Activated T-helper 2 cell treated with anti-CD3 and anti-CD28 coated beads, Interferon-gamma antibody, Interleukin-2, Interleukin-4, amounts not matched to agents 10 μg/mL and 5 μg/mL and 100 μg/mL, durations not matched to agents 14 hours and 24 hours and 36 hours (primary cell): ENCODE measurements at regions of chr4 and their contacts with region 1.

Region 1: GRCh38 chr4:102525097-102525496 is 23.9 kb downstream of the NFKB1 start:
- DNase-seq: no peak
- H3K4me3 Mint-ChIP-seq: no peak overlapping the region
- H3K27ac Mint-ChIP-seq: peak overlapping the region; percentile 53
- H3K4me1 Mint-ChIP-seq: peaks cover 83% of the 10 kb centered on the region
- H3K27me3 Mint-ChIP-seq: no peaks in the 10 kb centered on the region

Region 2: GRCh38 chr4:102511830-102512605 is 13.1 kb before region 1 on chr4:
- intact Hi-C with region 1: no loop called
- DNase-seq: no peak
- H3K4me3 Mint-ChIP-seq: no peak overlapping the region
- H3K27ac Mint-ChIP-seq: no peak overlapping the region
- H3K4me1 Mint-ChIP-seq: peaks cover 53% of the 10 kb centered on the region
- H3K27me3 Mint-ChIP-seq: no peaks in the 10 kb centered on the region

Region 3: DNA sequence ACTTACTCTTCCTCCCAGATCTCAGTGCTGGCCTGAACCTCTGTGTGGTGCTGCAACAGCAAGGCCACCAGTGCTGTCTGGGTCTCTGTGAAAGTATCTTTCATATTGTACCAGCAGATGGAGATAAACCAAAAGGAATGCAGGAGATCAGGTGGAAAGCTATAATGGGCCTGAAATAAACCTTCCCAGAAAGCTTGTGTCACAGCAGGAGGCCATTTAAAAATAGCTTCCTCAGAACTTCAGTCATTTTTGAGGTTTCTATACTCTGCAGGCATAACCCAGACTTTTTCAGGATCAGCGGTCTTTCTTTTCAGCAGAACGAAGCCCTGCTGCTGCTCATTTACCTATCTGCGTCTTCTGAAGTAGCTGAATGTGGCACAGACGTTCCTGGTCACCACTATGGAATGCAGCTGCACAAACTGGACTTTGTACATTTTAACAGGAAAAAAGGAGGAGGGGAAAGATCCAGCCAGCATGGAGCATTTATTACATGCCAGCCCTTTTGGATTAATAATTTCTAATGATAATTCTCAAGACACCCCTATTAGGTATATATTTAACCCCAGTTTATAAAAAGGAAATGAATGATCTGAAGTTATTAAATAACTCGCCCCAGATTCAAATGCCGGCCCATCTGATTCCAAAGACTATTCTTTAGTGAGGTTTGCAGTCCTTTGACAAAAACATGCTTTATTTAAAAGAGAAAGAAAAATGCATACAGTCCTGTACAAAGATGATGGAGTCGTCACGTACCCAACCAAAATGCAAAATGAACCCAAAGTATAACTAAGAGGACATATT is 95.8 kb after region 1 on chr4:
- intact Hi-C with region 1: loop called (anchors 5 kb)
- DNase-seq: no peak
- H3K4me3 Mint-ChIP-seq: no peak overlapping the region
- H3K27ac Mint-ChIP-seq: peak overlapping the region; percentile 58
- H3K4me1 Mint-ChIP-seq: peaks cover 49% of the 10 kb centered on the region
- H3K27me3 Mint-ChIP-seq: no peaks in the 10 kb centered on the region

Region 4: GRCh38 chr4:102815981-102816380 is 290.9 kb after region 1 on chr4:
- intact Hi-C with region 1: no loop called
- DNase-seq: no peak
- H3K4me3 Mint-ChIP-seq: no peak overlapping the region
- H3K27ac Mint-ChIP-seq: peak overlapping the region; percentile 76
- H3K4me1 Mint-ChIP-seq: peaks cover 77% of the 10 kb centered on the region
- H3K27me3 Mint-ChIP-seq: no peaks in the 10 kb centered on the region